SK-N-SH (cell line): ENCODE measurements at regions of chr9 and their contacts with region 1.

Region 1: DNA sequence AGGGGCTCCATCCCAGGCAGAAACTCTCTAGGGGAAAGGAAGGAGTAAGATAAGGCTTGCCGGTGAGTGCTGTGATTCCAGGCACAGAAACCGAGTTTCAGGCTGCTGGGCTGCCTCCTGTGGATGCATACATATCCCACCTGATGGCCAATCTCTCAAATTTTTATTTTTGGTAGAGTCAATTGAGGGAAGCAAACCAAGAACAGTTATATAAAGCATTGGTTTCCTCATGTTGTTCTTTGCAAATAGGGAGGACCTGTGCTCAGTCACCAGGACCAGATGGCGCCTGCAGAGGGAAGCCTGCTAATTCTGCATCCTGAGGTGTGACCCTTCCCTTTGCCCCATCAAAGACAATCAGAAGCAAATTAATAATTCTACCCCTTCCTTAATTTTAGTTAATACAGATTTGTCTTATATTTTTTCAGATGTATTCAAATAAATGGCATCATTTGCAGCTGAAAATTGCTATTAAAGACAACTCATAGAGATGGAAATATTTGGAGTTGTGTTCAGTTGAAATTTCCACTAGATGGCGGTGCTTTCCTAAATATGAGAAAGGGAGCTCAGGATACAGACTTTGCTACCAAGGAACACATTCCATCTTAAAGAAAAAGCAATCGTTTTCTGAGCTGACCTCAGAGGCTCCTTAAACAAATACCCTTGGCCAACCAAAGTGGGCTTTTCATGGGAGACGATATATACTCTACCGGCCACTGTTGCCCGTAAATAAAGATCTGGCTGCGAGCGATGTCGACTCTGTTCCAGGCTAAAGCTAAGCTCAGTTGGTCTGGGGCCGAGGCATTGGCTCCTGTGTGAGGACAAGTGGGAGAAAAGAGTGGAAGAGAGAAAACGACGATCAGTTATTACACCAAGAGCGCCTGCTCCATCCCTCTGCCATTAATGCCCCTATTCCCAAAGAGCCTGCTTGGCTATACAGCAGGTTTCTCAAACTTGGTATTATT is 225.7 kb upstream of the KLF9 start:
- DNase-seq: no peak
- H3K4me3 ChIP-seq: peak overlapping the region in 1 of 2 experiments; percentile 24; a peak in 2 of 4 replicates
- H3K27ac ChIP-seq: no peak overlapping the region
- H3K4me1 ChIP-seq: no peaks in the 10 kb centered on the region
- H3K27me3 ChIP-seq: peaks cover 34% of the 10 kb centered on the region
- CTCF ChIP-seq: peak; percentile 83
- EP300 ChIP-seq: no peak
- RAD21 ChIP-seq: peak; percentile 86

Region 2: DNA sequence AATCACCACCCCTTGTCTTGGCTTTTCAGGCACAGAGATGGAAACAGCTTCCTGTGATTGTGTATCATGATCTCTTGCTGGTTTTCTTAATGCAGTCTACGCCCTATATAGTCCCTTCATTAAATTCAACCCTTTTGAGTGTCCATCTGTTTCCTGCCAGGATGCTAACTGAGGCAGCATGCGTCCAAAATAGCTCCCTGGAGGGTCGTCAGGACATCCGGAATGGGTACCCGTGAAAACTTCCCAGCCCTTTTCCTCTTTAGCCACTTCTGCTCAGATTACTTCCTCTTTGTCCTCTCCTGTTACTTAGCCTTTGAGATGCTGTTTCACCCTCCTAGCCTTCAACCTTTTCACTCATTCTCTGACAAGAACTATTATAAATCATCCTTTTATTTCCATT is 145.9 kb before region 1 on chr9:
- CTCF ChIA-PET with region 1: no interaction called
- POLR2A ChIA-PET with region 1: no interaction called
- DNase-seq: no peak
- H3K4me3 ChIP-seq: no peak overlapping the region
- H3K27ac ChIP-seq: no peak overlapping the region
- H3K4me1 ChIP-seq: no peaks in the 10 kb centered on the region
- H3K27me3 ChIP-seq: no peaks in the 10 kb centered on the region
- CTCF ChIP-seq: no peak
- EP300 ChIP-seq: no peak
- RAD21 ChIP-seq: no peak

Region 3: DNA sequence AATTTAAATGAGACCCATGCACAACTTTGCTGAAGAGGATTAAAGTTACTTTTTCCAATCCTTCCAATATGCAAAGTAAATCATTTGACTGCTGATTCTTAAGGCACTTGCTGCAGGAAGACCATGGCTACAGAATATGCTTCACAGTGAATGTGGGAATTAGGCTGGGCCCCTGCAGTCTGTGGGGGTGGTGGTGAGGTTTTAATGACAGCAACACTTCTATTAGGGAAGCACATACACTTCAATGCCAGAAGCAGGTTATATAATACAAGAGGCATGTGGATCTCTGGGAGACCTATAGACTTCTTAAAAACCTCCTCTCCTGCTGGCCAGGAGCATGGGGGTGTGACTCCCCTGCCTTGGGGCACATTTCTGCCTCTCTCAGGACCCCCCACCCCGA is 101.1 kb before region 1 on chr9:
- CTCF ChIA-PET with region 1: no interaction called
- POLR2A ChIA-PET with region 1: no interaction called
- DNase-seq: no peak
- H3K4me3 ChIP-seq: no peak overlapping the region
- H3K27ac ChIP-seq: no peak overlapping the region
- H3K4me1 ChIP-seq: no peaks in the 10 kb centered on the region
- H3K27me3 ChIP-seq: no peaks in the 10 kb centered on the region
- CTCF ChIP-seq: no peak
- EP300 ChIP-seq: no peak
- RAD21 ChIP-seq: no peak

Region 4: GRCh38 chr9:70625078-70625477 is 15.1 kb before region 1 on chr9:
- CTCF ChIA-PET with region 1: interaction called, 23 read pairs
- POLR2A ChIA-PET with region 1: no interaction called
- DNase-seq: no peak
- H3K4me3 ChIP-seq: no peak overlapping the region
- H3K27ac ChIP-seq: no peak overlapping the region
- H3K4me1 ChIP-seq: no peaks in the 10 kb centered on the region
- H3K27me3 ChIP-seq: no peaks in the 10 kb centered on the region
- CTCF ChIP-seq: no peak
- EP300 ChIP-seq: no peak
- RAD21 ChIP-seq: no peak

Region 5: DNA sequence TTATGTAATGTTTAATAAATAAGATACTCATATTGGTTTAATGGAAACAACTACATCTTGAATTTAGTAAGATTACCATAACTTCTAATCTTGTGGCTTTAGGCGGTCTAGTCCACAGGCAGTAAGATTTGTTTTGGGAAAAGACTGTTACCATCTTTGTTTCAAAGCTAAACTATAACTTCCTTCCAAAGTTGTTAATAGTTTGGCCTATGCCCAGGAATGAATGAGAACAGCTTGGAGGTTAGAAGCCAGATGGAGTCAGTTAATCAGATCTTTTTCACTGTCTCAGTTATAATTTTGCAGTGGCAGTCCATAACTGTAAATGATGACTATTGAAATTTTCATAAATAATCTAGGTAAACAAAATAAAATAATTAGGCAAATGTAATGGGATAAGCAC is 16.1 kb after region 1 on chr9:
- CTCF ChIA-PET with region 1: interaction called, 10 read pairs
- POLR2A ChIA-PET with region 1: no interaction called
- DNase-seq: no peak
- H3K4me3 ChIP-seq: no peak overlapping the region
- H3K27ac ChIP-seq: no peak overlapping the region
- H3K4me1 ChIP-seq: no peaks in the 10 kb centered on the region
- H3K27me3 ChIP-seq: no peaks in the 10 kb centered on the region; the same call in 1 of the 2 replicates
- CTCF ChIP-seq: no peak
- EP300 ChIP-seq: no peak
- RAD21 ChIP-seq: no peak

Region 6: DNA sequence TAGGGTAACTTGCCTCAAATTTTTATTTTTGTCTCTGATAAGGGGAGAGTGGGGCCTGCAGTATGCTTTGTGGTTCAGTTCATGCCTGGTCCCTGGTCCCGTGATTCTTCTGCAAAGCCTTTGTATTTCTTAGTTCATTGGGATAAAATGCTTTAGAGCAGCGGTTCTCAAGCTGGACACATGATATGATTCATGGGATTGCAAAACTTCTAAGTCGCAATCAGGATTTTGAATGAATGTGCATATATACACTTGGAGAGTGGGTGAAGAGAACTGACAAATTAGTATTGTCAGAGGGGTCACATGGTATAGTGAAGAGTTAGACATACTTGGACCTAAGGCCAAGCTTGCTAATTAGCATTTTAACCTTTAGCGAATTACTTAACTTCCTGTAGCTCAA is 39.7 kb after region 1 on chr9:
- CTCF ChIA-PET with region 1: interaction called, 10 read pairs
- POLR2A ChIA-PET with region 1: no interaction called
- DNase-seq: no peak
- H3K4me3 ChIP-seq: no peak overlapping the region
- H3K27ac ChIP-seq: no peak overlapping the region
- H3K4me1 ChIP-seq: no peaks in the 10 kb centered on the region
- H3K27me3 ChIP-seq: no peaks in the 10 kb centered on the region
- CTCF ChIP-seq: no peak
- EP300 ChIP-seq: no peak
- RAD21 ChIP-seq: no peak

Region 7: GRCh38 chr9:71001780-71002386 is 361.7 kb after region 1 on chr9:
- CTCF ChIA-PET with region 1: interaction called, 12 read pairs
- POLR2A ChIA-PET with region 1: no interaction called
- DNase-seq: peak; percentile 3
- H3K4me3 ChIP-seq: no peak overlapping the region
- H3K27ac ChIP-seq: no peak overlapping the region
- H3K4me1 ChIP-seq: no peaks in the 10 kb centered on the region
- H3K27me3 ChIP-seq: no peaks in the 10 kb centered on the region; the same call in 1 of the 2 replicates
- CTCF ChIP-seq: peak; percentile 62
- EP300 ChIP-seq: no peak
- RAD21 ChIP-seq: peak; percentile 50

Region 8: DNA sequence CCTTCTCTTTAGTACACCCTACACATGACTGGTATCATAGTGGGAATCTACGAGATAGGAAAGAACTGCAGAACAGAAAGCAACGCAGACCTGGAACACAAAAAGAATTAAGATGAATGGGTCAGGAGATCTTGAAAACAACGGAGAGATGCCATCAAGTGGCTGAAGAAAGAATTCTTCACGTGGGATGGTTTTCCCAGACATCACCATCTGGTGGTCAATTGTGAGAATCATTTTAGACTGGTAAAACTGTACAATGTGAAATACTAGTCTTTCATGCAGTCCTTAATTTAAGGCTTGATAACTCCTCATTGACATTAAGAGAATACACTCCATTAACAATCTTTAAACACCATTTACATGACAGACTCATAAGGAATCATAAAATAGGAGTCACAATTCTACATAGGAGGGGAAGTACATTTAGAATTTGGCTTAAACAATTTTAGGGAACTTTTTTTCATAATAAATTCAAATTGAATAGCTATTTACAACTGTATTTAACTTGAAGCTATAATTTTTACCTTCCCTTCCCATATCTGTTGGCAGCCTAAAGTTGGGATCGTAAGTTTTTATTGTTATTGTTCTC is 609.7 kb after region 1 on chr9:
- CTCF ChIA-PET with region 1: interaction called, 80 read pairs
- POLR2A ChIA-PET with region 1: no interaction called
- DNase-seq: peak; percentile 33
- H3K4me3 ChIP-seq: no peak overlapping the region; a peak in 1 of 4 replicates
- H3K27ac ChIP-seq: no peak overlapping the region
- H3K4me1 ChIP-seq: no peaks in the 10 kb centered on the region; a peak in 1 of 4 replicates
- H3K27me3 ChIP-seq: no peaks in the 10 kb centered on the region; the same call in 1 of the 2 replicates
- CTCF ChIP-seq: peak; percentile 87
- EP300 ChIP-seq: no peak
- RAD21 ChIP-seq: peak; percentile 72

Region 9: DNA sequence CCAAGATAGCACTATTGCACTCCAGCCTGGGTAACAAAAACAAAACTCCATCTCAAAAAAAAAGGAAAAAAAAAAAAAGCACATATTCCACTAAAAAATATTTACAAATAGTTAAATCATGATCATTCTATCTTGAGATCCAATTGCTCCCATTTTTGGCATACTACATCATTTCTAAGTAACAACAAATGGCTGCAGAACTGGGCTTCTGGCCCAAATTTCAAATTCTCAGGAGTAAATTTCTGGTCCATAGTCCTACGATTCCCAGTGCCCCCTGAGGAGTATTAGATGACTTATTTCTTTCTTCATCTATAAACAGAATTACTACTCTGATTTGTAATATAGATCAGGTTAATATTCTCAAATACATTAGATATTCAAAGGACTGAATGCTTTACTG is 1066.0 kb after region 1 on chr9:
- CTCF ChIA-PET with region 1: no interaction called
- POLR2A ChIA-PET with region 1: no interaction called
- DNase-seq: no peak
- H3K4me3 ChIP-seq: no peak overlapping the region
- H3K27ac ChIP-seq: no peak overlapping the region
- H3K4me1 ChIP-seq: no peaks in the 10 kb centered on the region
- H3K27me3 ChIP-seq: no peaks in the 10 kb centered on the region
- CTCF ChIP-seq: no peak
- EP300 ChIP-seq: no peak
- RAD21 ChIP-seq: no peak